ENCODE measurements at regions of chr13 and their contacts with region 1.

Region 1: DNA sequence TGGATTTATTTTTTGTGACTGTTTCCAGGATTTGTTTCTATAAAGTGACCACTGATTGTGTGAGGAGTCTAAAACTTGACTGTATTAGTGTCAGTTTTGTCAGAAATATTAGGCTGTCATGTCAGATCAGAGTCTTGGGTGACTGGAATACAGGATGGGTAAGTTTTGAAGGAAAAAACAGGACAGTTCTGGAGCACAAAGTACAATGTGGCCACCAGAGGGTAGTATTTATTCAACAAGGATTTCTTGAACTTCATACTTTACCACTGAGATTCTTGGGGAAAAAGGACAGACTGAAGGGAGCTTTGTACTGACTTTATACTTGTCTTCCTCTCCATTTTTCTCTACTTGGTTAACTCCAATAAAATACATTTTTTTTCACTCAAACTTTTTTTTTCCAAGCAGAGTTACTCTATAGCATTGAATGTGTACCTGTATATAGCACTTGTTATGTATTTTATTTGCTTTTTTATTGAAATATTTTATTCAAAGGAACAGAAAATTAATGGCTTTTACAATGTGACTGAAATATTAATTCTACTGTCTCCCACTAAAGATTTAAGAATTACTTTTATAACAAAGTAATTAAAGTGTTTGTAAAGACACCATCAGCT is 51.1 kb downstream of the LMO7 start:
- DNase-seq: peak in 1 of 2 experiments; percentile 53
- H3K4me3 ChIP-seq: no peak overlapping the region
- H3K4me3 Mint-ChIP-seq: no peak overlapping the region
- H3K27ac Mint-ChIP-seq: no peak overlapping the region
- H3K4me1 ChIP-seq: peaks cover 23% of the 10 kb centered on the region; the same call in 1 of the 2 replicates
- H3K4me1 Mint-ChIP-seq: peaks cover 27% of the 10 kb centered on the region
- H3K27me3 ChIP-seq: no peaks in the 10 kb centered on the region
- H3K27me3 Mint-ChIP-seq: no peaks in the 10 kb centered on the region
- CTCF ChIP-seq: peak; percentile 56 to 65

Region 2: GRCh38 chr13:75558145-75558840 is 129.0 kb before region 1 on chr13:
- CTCF ChIA-PET with region 1: no interaction called
- POLR2A ChIA-PET with region 1: interaction called, 13 read pairs
- intact Hi-C with region 1: no loop called
- DNase-seq: no peak
- H3K4me3 ChIP-seq: no peak overlapping the region
- H3K4me3 Mint-ChIP-seq: no peak overlapping the region
- H3K27ac Mint-ChIP-seq: no peak overlapping the region
- H3K4me1 ChIP-seq: no peaks in the 10 kb centered on the region
- H3K4me1 Mint-ChIP-seq: peaks cover 20% of the 10 kb centered on the region
- H3K27me3 ChIP-seq: no peaks in the 10 kb centered on the region
- H3K27me3 Mint-ChIP-seq: no peaks in the 10 kb centered on the region
- CTCF ChIP-seq: no peak

Region 3: DNA sequence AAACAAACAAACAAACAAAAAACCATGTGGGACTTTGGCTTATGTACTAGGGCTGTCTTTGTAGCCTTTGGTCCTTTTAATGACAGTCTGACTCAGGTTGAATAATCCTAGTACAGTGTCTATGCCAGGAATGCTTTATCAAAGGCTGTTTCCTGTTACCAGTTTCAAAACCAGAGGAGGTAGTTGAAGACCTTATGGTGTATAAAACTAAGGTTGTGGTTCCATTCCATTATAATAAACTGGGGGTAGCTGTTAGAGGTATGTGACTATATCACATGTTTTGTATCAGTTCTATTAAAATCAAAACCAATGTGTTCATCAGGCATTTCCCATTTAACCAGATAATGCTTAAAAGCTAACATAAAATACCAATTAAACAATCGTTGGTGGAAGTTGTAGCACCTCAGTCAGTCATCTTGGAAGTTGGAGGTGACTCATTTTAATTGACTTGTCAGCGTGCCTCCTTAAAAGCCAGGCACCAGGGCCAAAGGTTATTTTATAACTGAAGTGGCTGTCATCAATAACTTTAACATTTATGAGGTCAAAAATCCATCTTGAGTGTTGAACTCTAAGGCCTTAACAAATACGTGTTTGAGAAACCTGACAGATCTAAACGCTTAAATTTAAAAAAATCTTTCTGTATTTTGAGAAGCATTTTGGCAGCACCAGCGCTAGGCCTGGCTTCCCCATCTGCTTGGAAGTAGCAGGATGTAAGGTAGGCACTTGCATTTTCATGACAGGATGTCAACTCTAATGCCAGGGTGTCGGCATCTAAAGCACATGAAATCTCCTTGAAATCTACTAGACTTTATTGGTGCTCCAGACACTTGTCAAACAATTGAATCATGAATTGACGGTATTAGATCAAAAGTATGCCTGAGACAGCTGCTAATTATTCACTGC is 111.3 kb after region 1 on chr13:
- CTCF ChIA-PET with region 1: no interaction called
- POLR2A ChIA-PET with region 1: interaction called, 3 read pairs
- intact Hi-C with region 1: loop called (anchors 1 kb)
- DNase-seq: no peak
- H3K4me3 ChIP-seq: no peak overlapping the region
- H3K4me3 Mint-ChIP-seq: no peak overlapping the region
- H3K27ac Mint-ChIP-seq: no peak overlapping the region
- H3K4me1 ChIP-seq: peaks cover 30% of the 10 kb centered on the region
- H3K4me1 Mint-ChIP-seq: peaks cover 37% of the 10 kb centered on the region
- H3K27me3 ChIP-seq: no peaks in the 10 kb centered on the region
- H3K27me3 Mint-ChIP-seq: no peaks in the 10 kb centered on the region
- CTCF ChIP-seq: no peak

Region 4: DNA sequence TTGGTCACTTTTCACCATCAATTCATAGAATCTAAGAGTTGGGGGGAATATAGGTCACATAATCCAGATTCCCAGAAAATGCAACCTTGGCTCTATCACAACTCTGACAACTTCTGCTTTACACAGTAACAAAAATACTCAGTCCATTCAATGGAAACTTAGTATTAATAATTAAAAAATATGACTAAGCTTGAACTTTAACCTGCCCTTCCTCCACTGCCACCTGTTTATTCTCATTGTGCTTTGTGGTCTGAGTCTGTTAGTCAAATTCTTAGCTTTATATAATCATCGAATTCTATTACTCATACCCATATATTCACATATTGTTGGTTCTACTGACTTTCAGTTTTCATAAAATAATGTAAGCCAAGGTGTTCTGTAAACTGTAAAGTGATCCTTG is 322.2 kb after region 1 on chr13:
- CTCF ChIA-PET with region 1: no interaction called
- POLR2A ChIA-PET with region 1: no interaction called
- intact Hi-C with region 1: loop called (anchors 10 kb)
- DNase-seq: peak in 1 of 2 experiments; percentile 48
- H3K4me3 ChIP-seq: no peak overlapping the region
- H3K4me3 Mint-ChIP-seq: peak overlapping the region; percentile 61
- H3K27ac Mint-ChIP-seq: peak overlapping the region; percentile 95
- H3K4me1 ChIP-seq: peaks cover 95% of the 10 kb centered on the region
- H3K4me1 Mint-ChIP-seq: peaks cover 53% of the 10 kb centered on the region
- H3K27me3 ChIP-seq: no peaks in the 10 kb centered on the region
- H3K27me3 Mint-ChIP-seq: no peaks in the 10 kb centered on the region
- CTCF ChIP-seq: no peak

Region 5: GRCh38 chr13:76175961-76176725 is 488.9 kb after region 1 on chr13:
- CTCF ChIA-PET with region 1: no interaction called
- POLR2A ChIA-PET with region 1: no interaction called
- intact Hi-C with region 1: no loop called
- DNase-seq: no peak
- H3K4me3 ChIP-seq: no peak overlapping the region
- H3K4me3 Mint-ChIP-seq: no peak overlapping the region
- H3K27ac Mint-ChIP-seq: no peak overlapping the region
- H3K4me1 ChIP-seq: no peaks in the 10 kb centered on the region
- H3K4me1 Mint-ChIP-seq: no peaks in the 10 kb centered on the region
- H3K27me3 ChIP-seq: no peaks in the 10 kb centered on the region
- H3K27me3 Mint-ChIP-seq: no peaks in the 10 kb centered on the region
- CTCF ChIP-seq: no peak

Region 6: GRCh38 chr13:76886292-76887075 is 1199.2 kb after region 1 on chr13 and contains the start of gene KCTD12:
- CTCF ChIA-PET with region 1: no interaction called
- POLR2A ChIA-PET with region 1: no interaction called
- intact Hi-C with region 1: loop called (anchors 5 kb)
- DNase-seq: peak; percentile 63 to 82
- H3K4me3 ChIP-seq: peak within 1 kb of the TSS; percentile 56
- H3K4me3 Mint-ChIP-seq: peak within 1 kb of the TSS; percentile 79
- H3K27ac Mint-ChIP-seq: peak within 1 kb of the TSS; percentile 35
- H3K4me1 ChIP-seq: 0 out of 2 replicates have a peak, but pooled peaks cover 15% of the 10 kb centered on the region
- H3K4me1 Mint-ChIP-seq: peaks cover 14% of the 10 kb centered on the region
- H3K27me3 ChIP-seq: no peaks in the 10 kb centered on the region; the same call in 1 of the 2 replicates
- H3K27me3 Mint-ChIP-seq: peaks cover 30% of the 10 kb centered on the region
- CTCF ChIP-seq: peak in 1 of 2 experiments; percentile 30
- total RNA-seq, gene KCTD12: 1.8 and 3.2 TPM in 2 replicates